H1 (cell line): ENCODE measurements at regions of chr7 and their contacts with region 1.

Region 1: DNA sequence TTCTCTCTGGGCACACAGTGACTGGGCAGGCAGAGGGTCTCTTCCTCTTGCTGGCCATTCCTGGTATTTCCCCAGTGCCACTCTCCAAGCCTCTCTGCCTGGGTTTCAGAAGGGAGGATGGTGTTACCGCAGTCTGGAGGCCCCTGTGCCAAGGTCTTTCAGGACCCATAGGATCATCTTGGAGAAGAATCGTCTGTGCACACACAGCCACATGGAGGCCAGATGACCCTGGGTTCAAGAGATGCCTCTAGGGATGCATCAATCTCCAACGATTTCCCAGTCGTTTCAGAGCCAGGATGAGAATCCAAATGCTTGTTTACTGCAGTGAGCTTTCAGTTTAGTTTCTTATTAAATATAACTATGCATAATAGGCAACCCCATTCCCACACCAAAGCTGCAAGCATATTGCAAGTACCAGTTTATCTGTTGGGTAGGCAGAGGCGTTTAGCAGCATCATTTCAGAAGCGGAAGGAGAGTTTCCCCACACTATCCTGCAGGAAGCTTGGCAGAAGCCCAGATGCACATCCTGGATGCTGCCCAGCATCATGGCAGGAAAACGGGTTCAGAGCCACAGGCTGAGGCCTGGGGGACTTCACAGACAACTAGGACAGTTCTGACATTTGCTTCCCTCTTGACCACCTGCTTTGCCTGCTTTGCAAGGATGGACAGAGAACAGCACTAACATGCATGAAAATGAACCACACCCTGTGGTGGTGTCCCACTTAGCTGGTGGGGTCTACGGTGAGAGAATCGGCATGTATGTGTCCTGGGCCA is 134.7 kb upstream of the FAM20C start:
- DNase-seq: peak in 1 of 2 experiments; percentile 42
- H3K4me3 ChIP-seq: no peak overlapping the region
- H3K27ac ChIP-seq: no peak overlapping the region
- H3K4me1 ChIP-seq: peaks cover 0 to 17% (median 10%) of the 10 kb centered on the region in 4 experiments; a peak in 6 of 7 replicates
- H3K27me3 ChIP-seq: no peaks in the 10 kb centered on the region
- CTCF ChIP-seq: no peak
- EP300 ChIP-seq: no peak
- POLR2A ChIP-seq: no peak
- RAD21 ChIP-seq: no peak

Region 2: DNA sequence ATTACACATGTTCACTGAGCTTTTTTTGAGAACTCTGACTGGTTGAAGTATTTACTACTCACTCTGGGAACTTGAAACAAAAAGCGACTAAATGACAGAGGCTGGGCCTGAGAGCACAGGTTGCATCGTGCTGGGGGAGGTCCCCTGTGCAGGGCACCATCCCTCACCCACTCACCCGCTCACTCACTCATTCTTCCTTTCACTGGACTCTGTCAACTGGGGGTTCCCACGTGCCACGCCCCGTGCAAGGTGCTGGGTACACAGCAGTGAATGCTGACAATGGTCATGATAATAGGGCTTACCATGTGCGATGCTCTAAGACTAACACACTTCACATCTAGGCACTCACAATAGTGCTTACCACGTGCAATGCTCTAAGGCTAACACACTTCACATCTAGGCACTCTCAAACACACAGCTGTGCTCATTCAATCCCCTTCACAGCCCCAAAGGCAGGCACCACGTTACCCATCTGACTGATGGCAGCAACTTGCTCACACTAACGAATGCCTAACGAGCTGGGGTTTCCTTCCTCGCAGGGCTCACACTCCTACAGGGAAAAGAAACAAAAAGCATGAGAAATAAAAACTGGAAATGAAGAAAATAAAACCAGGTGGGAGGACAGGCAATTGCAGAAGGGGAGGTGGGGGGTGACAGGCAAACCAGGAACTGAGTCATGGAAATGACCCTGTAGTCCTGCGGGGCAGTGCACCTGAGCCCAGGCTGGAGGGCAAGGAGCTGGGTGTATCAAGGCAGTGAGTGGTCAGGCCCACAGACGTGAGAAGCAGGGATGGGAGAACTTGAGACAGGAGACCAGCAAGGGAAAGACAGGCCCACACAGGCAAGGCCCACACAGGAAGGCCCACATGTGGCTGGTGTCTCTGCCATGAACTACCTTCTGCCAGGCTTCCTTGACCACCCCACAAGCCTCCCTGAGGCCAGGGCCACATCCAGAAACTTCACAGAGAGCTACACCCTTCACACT is 12.3 kb before region 1 on chr7:
- CTCF ChIA-PET with region 1: interaction called, 26 read pairs
- POLR2A ChIA-PET with region 1: interaction called, 4 read pairs
- DNase-seq: no peak
- H3K4me3 ChIP-seq: no peak overlapping the region
- H3K27ac ChIP-seq: no peak overlapping the region
- H3K4me1 ChIP-seq: peaks cover 0 to 3% (median under 1%) of the 10 kb centered on the region in 4 experiments; a peak in 3 of 7 replicates
- H3K27me3 ChIP-seq: peaks cover 0 to 2% (median 0%) of the 10 kb centered on the region in 4 experiments; a peak in 1 of 7 replicates
- CTCF ChIP-seq: no peak
- EP300 ChIP-seq: no peak
- POLR2A ChIP-seq: no peak
- RAD21 ChIP-seq: no peak

Region 3: DNA sequence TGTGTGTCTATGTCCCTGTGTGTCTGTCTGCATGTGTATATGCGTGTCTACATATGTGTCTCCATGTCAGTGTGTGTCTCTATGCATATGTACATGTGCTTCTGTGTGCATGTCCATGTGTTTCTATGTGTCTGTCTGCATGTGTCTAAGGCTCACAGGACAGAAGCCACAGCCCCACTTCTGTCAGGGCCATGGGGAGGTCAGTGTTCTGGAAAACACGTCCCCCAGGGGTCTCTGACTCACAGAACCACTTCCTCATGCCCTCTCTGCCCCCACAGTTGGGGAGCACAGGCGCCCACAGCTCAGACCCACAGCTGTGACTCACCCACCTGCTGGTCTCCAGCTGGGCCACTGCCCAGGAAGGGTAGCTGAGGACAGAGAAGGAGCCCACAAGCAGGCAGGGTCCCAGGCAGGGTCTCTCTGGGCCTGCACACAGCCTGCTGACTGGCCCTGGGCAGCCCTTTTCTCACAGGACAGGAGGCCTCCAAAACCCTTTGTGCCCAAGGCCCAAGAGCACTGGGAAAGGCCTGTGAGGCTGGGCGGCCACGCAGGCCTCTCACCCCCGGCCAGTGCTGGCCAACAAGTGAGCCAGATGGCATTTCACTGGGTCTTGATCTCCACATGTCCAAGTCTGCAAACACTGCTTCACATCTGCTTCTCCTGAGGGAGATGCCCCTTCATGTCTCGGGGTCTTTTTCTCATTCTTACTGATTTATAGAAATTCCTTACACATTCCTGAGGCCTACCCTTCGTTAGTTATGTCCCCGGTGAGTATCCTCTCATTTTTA is 31.8 kb after region 1 on chr7:
- CTCF ChIA-PET with region 1: interaction called, 20 read pairs
- POLR2A ChIA-PET with region 1: interaction called, 3 read pairs
- DNase-seq: peak in 1 of 2 experiments; percentile 43
- H3K4me3 ChIP-seq: no peak overlapping the region
- H3K27ac ChIP-seq: no peak overlapping the region
- H3K4me1 ChIP-seq: peaks cover 11 to 25% (median 15%) of the 10 kb centered on the region in 4 experiments
- H3K27me3 ChIP-seq: peaks cover 0 to 2% (median 0%) of the 10 kb centered on the region in 4 experiments; a peak in 1 of 7 replicates
- CTCF ChIP-seq: no peak
- EP300 ChIP-seq: no peak
- POLR2A ChIP-seq: no peak
- RAD21 ChIP-seq: no peak

Region 4: GRCh38 chr7:119392-120163 is 61.9 kb after region 1 on chr7:
- CTCF ChIA-PET with region 1: interaction called, 14 read pairs
- POLR2A ChIA-PET with region 1: no interaction called
- DNase-seq: no peak
- H3K4me3 ChIP-seq: no peak overlapping the region
- H3K27ac ChIP-seq: no peak overlapping the region
- H3K4me1 ChIP-seq: peaks cover 3 to 32% (median 17%) of the 10 kb centered on the region in 4 experiments
- H3K27me3 ChIP-seq: peaks cover 0 to 6% (median under 1%) of the 10 kb centered on the region in 4 experiments; a peak in 3 of 7 replicates
- CTCF ChIP-seq: no peak
- EP300 ChIP-seq: no peak
- POLR2A ChIP-seq: no peak
- RAD21 ChIP-seq: no peak

Region 5: DNA sequence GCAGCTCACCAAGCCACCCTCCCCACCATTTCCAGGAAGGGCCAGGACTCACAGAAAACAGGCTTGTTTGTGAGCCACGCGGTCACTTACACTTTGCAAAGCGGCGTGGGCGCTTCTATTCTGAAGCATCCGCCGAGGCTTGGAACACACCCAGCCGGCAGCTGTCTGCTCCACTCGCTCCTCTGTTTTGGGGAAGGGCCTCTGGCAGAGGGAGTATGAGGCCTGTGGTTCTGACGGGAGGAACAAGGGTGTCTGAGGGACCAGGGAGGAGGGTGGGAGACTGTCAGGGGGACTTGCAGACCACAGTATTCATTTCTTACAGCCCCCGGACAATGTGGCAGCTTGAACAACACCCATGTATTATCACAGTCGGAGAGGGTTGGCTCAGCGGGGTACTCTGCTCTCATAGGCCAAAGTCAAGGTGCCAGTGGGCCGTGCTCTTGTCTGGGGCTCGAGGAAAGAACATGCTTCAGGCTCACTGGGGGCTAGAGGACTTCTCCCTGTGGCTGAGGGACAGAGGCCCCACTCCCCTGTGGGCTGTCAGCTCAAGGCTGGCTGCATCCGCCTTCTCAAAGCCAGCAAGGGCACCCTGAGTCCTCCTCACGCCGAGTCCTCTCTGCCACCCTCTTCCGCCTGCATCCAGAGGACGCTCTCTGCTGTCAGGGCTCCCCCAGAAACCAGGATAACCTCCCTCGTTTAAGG is 74.3 kb after region 1 on chr7:
- CTCF ChIA-PET with region 1: interaction called, 13 read pairs
- POLR2A ChIA-PET with region 1: no interaction called
- DNase-seq: no peak
- H3K4me3 ChIP-seq: no peak overlapping the region
- H3K27ac ChIP-seq: no peak overlapping the region
- H3K4me1 ChIP-seq: peaks cover 0 to 5% (median under 1%) of the 10 kb centered on the region in 4 experiments; a peak in 3 of 7 replicates
- H3K27me3 ChIP-seq: no peaks in the 10 kb centered on the region
- CTCF ChIP-seq: no peak
- EP300 ChIP-seq: no peak
- POLR2A ChIP-seq: no peak
- RAD21 ChIP-seq: no peak

Region 6: DNA sequence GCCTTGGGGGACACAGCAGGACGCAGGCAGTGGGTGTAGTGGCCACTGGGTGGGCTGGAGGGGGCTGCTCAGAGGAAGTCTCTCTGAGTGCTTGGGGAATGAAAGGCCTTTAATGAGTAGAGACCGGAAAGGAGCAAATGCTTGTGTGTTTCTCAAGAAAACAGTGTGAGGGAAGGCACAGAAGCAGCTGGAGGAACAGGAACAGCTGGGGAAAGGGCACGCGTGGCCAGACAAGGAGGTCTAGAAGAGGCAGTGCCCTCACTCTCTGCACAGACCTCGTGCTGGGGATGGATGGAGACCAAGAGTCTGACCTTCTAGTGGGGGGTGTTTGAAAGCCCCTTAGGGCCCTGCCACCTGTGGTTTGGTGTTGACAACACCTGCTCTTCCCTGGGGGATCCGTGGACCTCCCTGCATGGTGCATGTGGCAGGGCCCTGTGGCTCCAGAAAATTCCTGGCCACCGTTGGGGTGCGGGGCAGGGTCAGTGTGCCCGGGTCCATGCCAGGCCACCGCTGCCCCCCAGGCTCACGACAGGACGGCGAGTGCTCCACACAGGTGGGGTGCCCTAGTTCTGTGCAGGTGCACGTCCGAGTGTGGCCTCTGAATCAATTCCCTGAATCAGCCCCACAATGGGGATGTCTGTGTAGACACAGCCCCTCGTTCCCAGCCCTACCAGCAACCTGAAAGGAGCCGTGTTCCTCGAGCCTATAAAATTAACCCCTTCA is 108.8 kb after region 1 on chr7:
- CTCF ChIA-PET with region 1: no interaction called
- POLR2A ChIA-PET with region 1: no interaction called
- DNase-seq: no peak
- H3K4me3 ChIP-seq: no peak overlapping the region
- H3K27ac ChIP-seq: no peak overlapping the region
- H3K4me1 ChIP-seq: peaks cover 0 to 7% (median under 1%) of the 10 kb centered on the region in 4 experiments; a peak in 3 of 7 replicates
- H3K27me3 ChIP-seq: peaks cover 0 to 3% (median 0%) of the 10 kb centered on the region in 4 experiments; a peak in 2 of 7 replicates
- CTCF ChIP-seq: no peak
- EP300 ChIP-seq: no peak
- POLR2A ChIP-seq: no peak
- RAD21 ChIP-seq: no peak

Region 7: DNA sequence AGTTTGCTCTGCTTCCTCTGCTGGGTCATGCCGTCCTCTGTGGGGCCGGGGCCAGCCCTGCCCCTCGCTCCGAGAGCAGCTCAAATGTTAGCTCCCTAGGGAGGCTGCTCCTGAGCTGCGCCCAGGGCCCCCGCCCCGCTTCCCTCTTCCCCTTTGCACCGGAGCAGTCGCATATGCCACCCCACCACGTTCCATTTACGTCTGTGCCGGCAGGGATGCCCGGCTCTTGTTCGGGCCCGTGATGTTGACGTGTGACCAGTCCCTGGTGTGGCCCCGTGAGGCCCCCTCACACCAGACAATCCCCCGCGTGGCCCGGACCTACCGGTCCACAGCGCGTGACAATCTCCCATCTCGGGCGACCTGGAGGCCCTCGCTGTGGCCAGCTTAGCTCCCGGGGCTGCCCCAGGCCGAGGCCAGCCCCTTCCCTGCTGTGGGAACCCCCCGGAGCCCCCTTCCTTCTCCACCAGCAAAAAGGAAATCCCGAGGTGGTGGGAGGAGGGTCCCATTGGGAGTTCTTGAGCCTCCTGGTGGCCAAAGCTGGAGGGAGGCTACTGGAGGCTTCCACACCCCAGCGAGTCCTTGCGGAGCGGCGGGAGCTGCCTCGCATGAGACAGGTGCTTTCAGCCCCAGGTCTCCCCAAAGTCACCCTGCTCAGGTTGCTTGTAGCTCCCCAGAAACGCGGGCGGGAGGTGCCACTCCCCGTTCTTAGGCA is 149.9 kb after region 1 on chr7:
- CTCF ChIA-PET with region 1: interaction called, 30 read pairs
- POLR2A ChIA-PET with region 1: no interaction called
- DNase-seq: no peak
- H3K4me3 ChIP-seq: no peak overlapping the region
- H3K27ac ChIP-seq: no peak overlapping the region
- H3K4me1 ChIP-seq: peaks cover 0 to 4% (median 0%) of the 10 kb centered on the region in 4 experiments; a peak in 1 of 7 replicates
- H3K27me3 ChIP-seq: no peaks in the 10 kb centered on the region
- CTCF ChIP-seq: peak in 2 of 3 experiments; percentile 54 to 69; a peak in 2 of 4 replicates
- EP300 ChIP-seq: no peak
- POLR2A ChIP-seq: no peak
- RAD21 ChIP-seq: peak; percentile 45 to 66